Activated CD4-positive, alpha-beta T cell treated with anti-CD3 and anti-CD28 coated beads, Interleukin-2, amount 10 ng/mL, durations not matched to agents 24 days and 14 days (primary cell): ENCODE measurements at regions of chr6 and their contacts with region 1.

Region 1: GRCh38 chr6:10886691-10887535 is at the start of gene SYCP2L:
- DNase-seq: no peak
- H3K4me3 Mint-ChIP-seq: peak within 1 kb of the TSS; percentile 39
- H3K27ac Mint-ChIP-seq: no peak within 1 kb of the TSS
- H3K4me1 Mint-ChIP-seq: peaks cover 4% of the 10 kb centered on the region
- H3K27me3 Mint-ChIP-seq: peaks cover 76% of the 10 kb centered on the region
- total RNA-seq, gene SYCP2L: not detected in 2 replicates

Region 2: DNA sequence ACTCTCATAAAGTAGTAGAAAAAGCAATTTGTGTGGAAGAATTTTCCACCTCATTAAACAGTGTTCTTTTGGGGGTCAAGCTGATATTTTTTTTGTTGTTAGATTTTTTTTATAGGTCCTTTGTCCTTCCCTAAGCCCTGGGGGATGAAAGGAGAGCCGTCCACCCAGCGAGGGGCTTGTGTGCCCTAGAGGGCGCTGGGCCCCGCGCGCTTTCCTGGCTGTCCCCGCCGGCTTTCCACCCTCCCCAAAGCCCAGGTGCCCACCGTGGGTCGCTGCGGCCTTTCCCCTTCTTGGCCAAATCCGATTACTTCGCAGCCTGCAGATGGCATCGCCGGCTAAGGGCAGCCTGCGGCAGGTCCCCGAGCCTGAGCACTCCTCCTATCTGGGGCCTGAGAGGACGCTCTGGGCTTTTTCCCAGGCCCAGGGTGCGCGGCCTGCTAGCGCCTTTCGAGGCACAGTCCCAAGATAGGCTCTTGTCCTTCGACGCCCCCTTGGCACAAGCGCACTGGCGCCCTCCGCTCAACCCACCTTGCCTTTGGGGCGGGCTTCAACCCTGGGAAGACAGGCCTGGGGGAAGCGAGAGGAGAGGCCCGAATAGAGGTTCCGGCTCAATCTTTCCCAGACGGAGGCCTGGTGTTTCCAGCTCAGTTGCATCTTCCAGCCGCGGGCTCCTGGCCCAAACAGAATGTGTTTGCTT is 505.6 kb before region 1 on chr6:
- intact Hi-C with region 1: loop called (anchors 10 kb)
- DNase-seq: no peak
- H3K4me3 Mint-ChIP-seq: no peak overlapping the region
- H3K27ac Mint-ChIP-seq: no peak overlapping the region
- H3K4me1 Mint-ChIP-seq: peaks cover 4% of the 10 kb centered on the region
- H3K27me3 Mint-ChIP-seq: peaks cover 56% of the 10 kb centered on the region

Region 3: GRCh38 chr6:10411971-10412745 is 474.8 kb before region 1 on chr6:
- intact Hi-C with region 1: loop called (anchors 5 kb)
- DNase-seq: peak; percentile 86
- H3K4me3 Mint-ChIP-seq: peak overlapping the region; percentile 92
- H3K27ac Mint-ChIP-seq: peak overlapping the region; percentile 76
- H3K4me1 Mint-ChIP-seq: peaks cover 31% of the 10 kb centered on the region
- H3K27me3 Mint-ChIP-seq: peaks cover 89% of the 10 kb centered on the region

Region 4: DNA sequence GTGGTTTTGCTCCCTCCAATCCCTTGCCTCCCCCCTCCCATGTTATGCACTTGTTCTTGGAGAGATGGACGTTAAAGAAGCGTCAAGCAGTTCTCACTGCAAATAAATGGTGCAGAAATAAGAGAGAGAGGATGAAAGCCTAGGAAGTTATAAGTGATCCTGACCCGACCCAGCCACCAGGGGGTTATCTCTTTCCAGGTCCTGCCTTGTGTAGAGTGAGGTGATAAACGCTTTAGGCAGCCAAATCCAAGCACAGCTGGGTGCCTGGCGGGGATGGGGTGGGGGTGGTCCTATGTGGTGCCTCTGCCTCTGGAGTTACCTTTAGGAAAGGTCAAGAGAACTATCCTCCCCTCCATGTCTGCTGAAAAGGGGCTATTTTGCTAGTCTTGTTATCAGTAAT is 462.9 kb before region 1 on chr6:
- intact Hi-C with region 1: loop called (anchors 5 kb)
- DNase-seq: no peak
- H3K4me3 Mint-ChIP-seq: no peak overlapping the region
- H3K27ac Mint-ChIP-seq: no peak overlapping the region
- H3K4me1 Mint-ChIP-seq: peaks cover 5% of the 10 kb centered on the region
- H3K27me3 Mint-ChIP-seq: peaks cover 87% of the 10 kb centered on the region

Region 5: DNA sequence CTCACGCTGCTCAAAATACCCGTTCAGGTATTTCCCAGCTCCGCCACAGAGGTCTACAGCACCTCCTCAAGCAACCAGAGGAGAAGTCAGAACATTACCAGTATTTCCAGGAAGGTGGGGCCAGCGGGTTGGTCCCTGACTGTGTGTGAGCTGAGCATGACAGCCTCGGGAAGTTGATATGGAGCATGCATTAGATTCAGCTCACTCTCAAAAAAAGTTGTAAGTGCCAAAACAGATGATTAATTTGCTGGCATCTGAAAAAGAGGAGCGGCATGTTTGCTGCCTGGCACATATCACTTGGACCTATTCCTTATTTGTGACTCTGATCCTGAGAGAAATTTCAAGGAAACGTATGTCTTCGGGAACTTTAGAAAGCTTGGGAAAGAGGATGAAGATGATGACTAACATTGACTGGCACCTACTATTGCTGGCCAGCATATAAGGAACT is 124.9 kb after region 1 on chr6:
- intact Hi-C with region 1: no loop called
- DNase-seq: no peak
- H3K4me3 Mint-ChIP-seq: no peak overlapping the region
- H3K27ac Mint-ChIP-seq: no peak overlapping the region
- H3K4me1 Mint-ChIP-seq: no peaks in the 10 kb centered on the region
- H3K27me3 Mint-ChIP-seq: peaks cover 26% of the 10 kb centered on the region

Region 6: GRCh38 chr6:11043961-11044711 is 157.2 kb after region 1 on chr6 and contains the start of gene ELOVL2:
- intact Hi-C with region 1: loop called (anchors 10 kb)
- DNase-seq: peak; percentile 72
- H3K4me3 Mint-ChIP-seq: peak within 1 kb of the TSS; percentile 79
- H3K27ac Mint-ChIP-seq: peak within 1 kb of the TSS; percentile 64
- H3K4me1 Mint-ChIP-seq: peaks cover 6% of the 10 kb centered on the region
- H3K27me3 Mint-ChIP-seq: peaks cover 61% of the 10 kb centered on the region
- total RNA-seq, gene ELOVL2: not detected in 2 replicates

Region 7: DNA sequence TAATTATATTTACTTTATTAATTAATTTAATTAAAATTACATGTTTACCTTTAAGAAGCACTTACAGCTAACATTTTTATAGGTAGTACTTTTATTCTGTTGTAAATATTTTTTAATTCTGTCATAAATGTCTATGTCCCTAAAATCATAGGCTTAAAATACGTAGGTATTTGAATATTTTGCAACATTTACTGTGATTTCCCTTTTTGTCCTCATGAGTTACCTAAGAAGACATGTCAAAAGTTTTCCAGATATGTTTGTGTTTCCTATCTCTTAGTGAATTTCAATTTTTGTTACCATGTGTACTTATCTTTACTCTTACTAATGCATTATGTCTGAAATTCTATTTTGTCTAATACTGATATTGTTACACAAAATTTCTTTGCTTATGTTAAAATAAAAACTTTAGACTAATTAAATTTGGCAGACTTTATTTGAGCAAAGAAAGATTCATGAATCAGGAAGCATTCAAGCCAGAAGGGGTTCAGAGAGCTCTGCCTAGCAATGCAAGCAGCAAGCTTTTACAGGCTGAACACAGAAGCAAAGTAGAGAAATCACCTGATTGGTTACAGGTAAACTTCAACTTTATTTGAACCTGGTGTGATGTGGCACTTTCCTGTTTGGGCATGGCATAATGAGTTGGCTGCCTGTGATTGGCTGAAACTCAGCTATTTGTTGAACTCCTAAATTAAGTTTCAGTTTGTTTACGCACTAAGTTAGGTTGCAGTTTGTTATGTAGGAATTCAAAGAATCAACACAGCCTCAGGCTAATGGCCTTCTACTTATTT is 527.5 kb after region 1 on chr6:
- intact Hi-C with region 1: no loop called
- DNase-seq: peak; percentile 78
- H3K4me3 Mint-ChIP-seq: no peak overlapping the region
- H3K27ac Mint-ChIP-seq: peak overlapping the region; percentile 41
- H3K4me1 Mint-ChIP-seq: peaks cover 44% of the 10 kb centered on the region
- H3K27me3 Mint-ChIP-seq: no peaks in the 10 kb centered on the region